K562 (cell line): ENCODE measurements at regions of chr2 and their contacts with region 1.

Region 1: GRCh38 chr2:26054598-26055348 is 20.9 kb downstream of the RAB10 start:
- DNase-seq: no peak
- ATAC-seq: peak; percentile 44
- H3K4me3 ChIP-seq: no peak overlapping the region
- H3K27ac ChIP-seq: 0 out of 3 replicates have a peak overlapping the region, but pooled peaks have one; percentile 4
- H3K4me1 ChIP-seq: peaks cover 20 to 24% of the 10 kb centered on the region in 2 experiments
- H3K27me3 ChIP-seq: no peaks in the 10 kb centered on the region
- CTCF ChIP-seq: no peak
- EP300 ChIP-seq: no peak
- POLR2A ChIP-seq: no peak
- RAD21 ChIP-seq: no peak

Region 2: GRCh38 chr2:25991965-25992364 is 62.8 kb before region 1 on chr2:
- CTCF ChIA-PET with region 1: no interaction called
- POLR2A ChIA-PET with region 1: no interaction called
- in situ Hi-C with region 1: no loop called
- intact Hi-C with region 1: loop called (anchors 5 kb)
- DNase-seq: peak in 1 of 4 experiments; percentile 21
- ATAC-seq: peak; percentile 72
- H3K4me3 ChIP-seq: no peak overlapping the region
- H3K27ac ChIP-seq: no peak overlapping the region
- H3K4me1 ChIP-seq: peaks cover 0 to 8% of the 10 kb centered on the region in 2 experiments; a peak in 3 of 5 replicates
- H3K27me3 ChIP-seq: no peaks in the 10 kb centered on the region
- CTCF ChIP-seq: no peak
- EP300 ChIP-seq: no peak
- POLR2A ChIP-seq: no peak
- RAD21 ChIP-seq: no peak

Region 3: DNA sequence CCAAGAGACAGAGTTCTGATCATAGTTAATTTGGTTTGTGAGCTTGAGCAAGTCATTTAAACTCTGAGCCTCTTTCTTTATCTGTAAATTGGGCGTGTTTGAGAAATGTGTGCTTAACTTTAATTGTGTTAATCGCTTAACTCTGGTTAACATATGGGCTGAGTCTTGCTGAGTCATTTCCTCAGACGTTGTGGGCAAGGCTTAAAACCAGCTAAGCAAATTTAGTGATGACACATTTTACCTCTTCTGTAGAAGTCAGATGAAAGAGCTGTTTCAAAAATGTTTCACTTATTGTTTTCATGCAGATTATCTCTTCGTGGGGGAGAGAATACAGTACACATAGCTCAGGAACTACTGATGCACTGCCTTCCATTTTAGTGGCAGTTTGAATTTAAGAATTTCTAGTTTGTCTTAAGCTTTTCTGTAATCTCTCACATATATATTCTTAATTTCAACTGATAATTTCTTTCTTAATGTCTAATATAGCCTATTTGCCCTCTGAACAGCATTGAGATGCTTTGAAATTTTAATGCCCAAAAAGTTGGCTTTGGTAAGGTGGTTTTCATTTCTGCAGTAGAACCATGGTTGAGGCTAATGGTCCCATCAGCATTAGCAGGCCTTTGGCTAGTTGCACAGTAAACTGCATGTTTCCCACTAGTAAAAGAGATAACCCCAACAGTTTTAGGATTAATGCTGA is 14.0 kb after region 1 on chr2:
- CTCF ChIA-PET with region 1: no interaction called
- POLR2A ChIA-PET with region 1: interaction called, 11 read pairs
- in situ Hi-C with region 1: no loop called
- intact Hi-C with region 1: no loop called
- DNase-seq: peak; percentile 64 to 95 (median 73)
- ATAC-seq: peak; percentile 71
- H3K4me3 ChIP-seq: no peak overlapping the region; the same call in 1 of the 2 replicates
- H3K27ac ChIP-seq: peak overlapping the region; percentile 98
- H3K4me1 ChIP-seq: peaks cover 32 to 77% of the 10 kb centered on the region in 2 experiments
- H3K27me3 ChIP-seq: no peaks in the 10 kb centered on the region
- CTCF ChIP-seq: no peak
- EP300 ChIP-seq: peak; percentile 98
- POLR2A ChIP-seq: peak; percentile 49
- RAD21 ChIP-seq: 0 out of 4 replicates have a peak, but pooled peaks of 1 of the 2 experiments have one; percentile 4

Region 4: GRCh38 chr2:26933431-26934334 is 878.9 kb after region 1 on chr2:
- CTCF ChIA-PET with region 1: no interaction called
- POLR2A ChIA-PET with region 1: no interaction called
- in situ Hi-C with region 1: no loop called
- intact Hi-C with region 1: no loop called
- DNase-seq: no peak
- ATAC-seq: peak; percentile 21; the same call in 1 of the 3 replicates
- H3K4me3 ChIP-seq: no peak overlapping the region
- H3K27ac ChIP-seq: no peak overlapping the region
- H3K4me1 ChIP-seq: peaks cover 0 to 6% of the 10 kb centered on the region in 2 experiments; a peak in 2 of 5 replicates
- H3K27me3 ChIP-seq: peaks cover 41 to 55% of the 10 kb centered on the region in 2 experiments; a peak in 4 of 5 replicates
- CTCF ChIP-seq: no peak
- EP300 ChIP-seq: no peak
- POLR2A ChIP-seq: no peak
- RAD21 ChIP-seq: no peak